A673 (cell line): ENCODE measurements at regions of chr2 and their contacts with region 1.

Region 1: DNA sequence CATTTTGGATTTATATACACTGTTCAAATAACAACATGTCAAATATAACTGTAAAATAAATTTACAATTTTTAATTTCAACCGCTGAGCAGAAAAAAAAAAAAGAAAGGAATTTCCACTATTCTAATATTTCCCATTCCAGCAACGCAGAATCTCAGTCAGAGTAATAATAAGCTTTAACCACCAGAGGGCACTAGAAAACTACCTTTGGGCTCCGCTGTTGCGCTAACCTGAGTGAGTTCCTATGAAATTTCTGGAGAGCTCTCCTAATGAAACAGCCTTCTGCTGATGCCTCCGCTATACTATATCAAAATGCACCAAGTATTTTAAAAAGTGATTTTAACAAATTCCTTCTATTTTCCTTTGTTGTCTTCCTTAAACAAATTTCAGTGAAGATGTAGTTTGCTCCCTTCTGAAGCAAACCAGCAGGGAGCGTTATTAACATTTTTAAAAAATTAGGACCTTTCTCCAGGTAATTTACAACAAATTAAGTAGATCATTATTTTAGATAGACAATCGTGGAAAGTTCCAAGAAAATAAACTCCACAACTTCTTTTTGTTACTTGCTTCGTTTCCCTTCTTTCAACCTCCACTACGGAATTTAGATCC is 23.0 kb downstream of the ERMN start:
- DNase-seq: peak; percentile 70
- H3K4me3 ChIP-seq: no peak overlapping the region
- H3K27ac ChIP-seq: no peak overlapping the region
- H3K4me1 ChIP-seq: no peaks in the 10 kb centered on the region
- H3K27me3 ChIP-seq: peaks cover 48% of the 10 kb centered on the region
- CTCF ChIP-seq: peak; percentile 81

Region 2: GRCh38 chr2:157327621-157328500 is 25.3 kb after region 1 on chr2:
- CTCF ChIA-PET with region 1: interaction called, 12 read pairs
- POLR2A ChIA-PET with region 1: no interaction called
- intact Hi-C with region 1: no loop called
- DNase-seq: peak; percentile 76
- H3K4me3 ChIP-seq: no peak overlapping the region
- H3K27ac ChIP-seq: no peak overlapping the region
- H3K4me1 ChIP-seq: no peaks in the 10 kb centered on the region
- H3K27me3 ChIP-seq: peaks cover 28% of the 10 kb centered on the region
- CTCF ChIP-seq: peak; percentile 94

Region 3: GRCh38 chr2:157336137-157337010 is 33.8 kb after region 1 on chr2:
- CTCF ChIA-PET with region 1: interaction called, 6 read pairs
- POLR2A ChIA-PET with region 1: no interaction called
- intact Hi-C with region 1: loop called (anchors 1 kb)
- DNase-seq: peak; percentile 60
- H3K4me3 ChIP-seq: no peak overlapping the region
- H3K27ac ChIP-seq: no peak overlapping the region
- H3K4me1 ChIP-seq: no peaks in the 10 kb centered on the region
- H3K27me3 ChIP-seq: no peaks in the 10 kb centered on the region
- CTCF ChIP-seq: peak; percentile 85

Region 4: GRCh38 chr2:157348291-157348921 is 45.8 kb after region 1 on chr2:
- CTCF ChIA-PET with region 1: no interaction called
- POLR2A ChIA-PET with region 1: no interaction called
- intact Hi-C with region 1: no loop called
- DNase-seq: no peak
- H3K4me3 ChIP-seq: no peak overlapping the region
- H3K27ac ChIP-seq: no peak overlapping the region
- H3K4me1 ChIP-seq: no peaks in the 10 kb centered on the region
- H3K27me3 ChIP-seq: no peaks in the 10 kb centered on the region
- CTCF ChIP-seq: no peak